Left ventricle myocardium inferior (tissue), 1 donor: ENCODE measurements at regions of chrX and their contacts with region 1.

Region 1: DNA sequence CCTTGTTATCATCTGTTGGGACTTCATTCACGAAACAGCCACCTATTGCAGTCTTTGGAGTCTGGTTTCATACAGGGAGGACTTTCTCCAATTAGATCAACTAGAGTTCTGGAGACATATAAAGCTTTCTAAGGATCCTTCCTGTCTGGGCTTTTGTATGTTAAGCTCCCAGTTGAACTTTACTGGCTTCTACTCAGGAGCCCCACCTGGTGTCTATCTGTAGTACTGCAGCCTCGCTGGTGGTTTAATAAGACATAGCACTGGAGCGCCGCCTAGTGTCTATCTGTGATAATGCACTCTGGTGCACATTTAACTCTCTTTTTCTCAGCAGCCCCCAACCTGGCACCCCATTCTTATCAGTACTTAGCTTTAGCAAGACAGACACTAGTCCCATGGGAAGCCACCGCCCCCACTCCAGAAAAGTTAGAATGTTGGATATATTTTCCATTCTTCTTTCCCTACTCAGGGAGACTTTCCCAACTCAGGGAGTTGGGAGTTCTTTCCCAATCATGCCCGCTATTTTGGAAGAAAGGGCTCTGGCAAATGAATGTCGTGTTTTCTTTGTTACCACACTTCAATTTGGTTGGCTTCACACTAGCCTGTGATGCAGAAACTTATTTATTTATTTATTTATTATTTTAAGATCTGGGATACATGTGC is 36.9 kb upstream of the SYTL4 start:
- DNase-seq: peak; percentile 62
- H3K4me3 ChIP-seq: no peak overlapping the region
- H3K27ac ChIP-seq: no peak overlapping the region
- H3K4me1 ChIP-seq: no peaks in the 10 kb centered on the region
- H3K27me3 ChIP-seq: no peaks in the 10 kb centered on the region
- CTCF ChIP-seq: peak; percentile 90

Region 2: GRCh38 chrX:100625985-100626491 is 142.8 kb before region 1 on chrX:
- intact Hi-C with region 1: no loop called
- DNase-seq: no peak
- H3K4me3 ChIP-seq: no peak overlapping the region
- H3K27ac ChIP-seq: no peak overlapping the region
- H3K4me1 ChIP-seq: no peaks in the 10 kb centered on the region
- H3K27me3 ChIP-seq: no peaks in the 10 kb centered on the region
- CTCF ChIP-seq: no peak

Region 3: GRCh38 chrX:100685284-100685996 is 83.4 kb before region 1 on chrX:
- intact Hi-C with region 1: loop called (anchors 5 kb)
- DNase-seq: no peak
- H3K4me3 ChIP-seq: no peak overlapping the region
- H3K27ac ChIP-seq: no peak overlapping the region
- H3K4me1 ChIP-seq: no peaks in the 10 kb centered on the region
- H3K27me3 ChIP-seq: no peaks in the 10 kb centered on the region
- CTCF ChIP-seq: peak; percentile 83

Region 4: GRCh38 chrX:100802843-100803242 is 34.0 kb after region 1 on chrX:
- intact Hi-C with region 1: no loop called
- DNase-seq: no peak
- H3K4me3 ChIP-seq: no peak overlapping the region
- H3K27ac ChIP-seq: no peak overlapping the region
- H3K4me1 ChIP-seq: no peaks in the 10 kb centered on the region
- H3K27me3 ChIP-seq: no peaks in the 10 kb centered on the region
- CTCF ChIP-seq: no peak

Region 5: DNA sequence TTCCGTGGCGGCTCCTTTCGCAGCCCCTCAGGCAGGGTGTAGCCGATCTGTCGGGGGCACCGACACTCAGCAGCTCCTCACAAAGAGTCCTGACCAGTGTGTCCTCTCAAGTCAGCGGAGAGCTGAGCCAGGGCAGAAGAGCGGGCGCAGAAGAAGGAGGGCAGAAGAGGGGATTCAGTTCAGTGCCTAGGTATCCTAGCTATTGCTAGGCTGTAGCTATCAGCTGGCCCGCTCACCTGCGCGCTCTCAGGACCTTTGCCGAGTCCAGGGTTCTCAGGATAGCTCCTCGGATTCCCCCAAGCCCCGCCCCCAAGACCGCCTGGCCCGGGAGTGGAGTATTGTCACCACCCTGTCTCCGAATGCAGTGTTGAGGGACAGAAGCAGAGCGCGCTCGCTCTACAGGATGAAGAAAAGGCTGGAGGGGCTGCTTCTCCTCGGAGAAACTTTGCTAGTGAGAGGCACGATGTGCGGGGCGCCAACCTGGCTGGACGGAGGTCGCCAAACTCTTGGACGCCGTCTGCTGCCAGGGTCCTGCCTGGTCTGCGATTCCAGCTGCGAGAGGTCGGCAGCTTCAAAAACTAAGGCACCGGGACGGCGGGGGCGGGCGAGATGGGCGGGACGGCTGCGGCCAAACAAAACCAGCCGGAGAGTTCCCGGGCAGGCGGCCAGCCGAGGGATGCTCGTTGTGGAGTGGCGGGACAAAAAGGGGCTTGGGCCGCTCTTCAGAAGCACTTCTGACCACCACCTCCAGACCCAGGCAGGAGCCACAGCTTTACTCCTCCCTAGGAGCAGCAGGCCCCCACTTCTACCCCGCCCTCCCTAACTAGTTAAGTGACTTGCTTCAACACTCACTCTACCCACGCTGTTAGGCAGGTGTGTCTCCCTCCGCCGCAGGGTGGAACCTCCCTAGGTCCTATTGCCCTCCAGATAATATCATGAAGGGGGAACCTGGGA is 160.1 kb after region 1 on chrX and contains the start of gene XKRX:
- intact Hi-C with region 1: no loop called
- DNase-seq: peak; percentile 20
- H3K4me3 ChIP-seq: peak within 1 kb of the TSS; percentile 58
- H3K27ac ChIP-seq: no peak within 1 kb of the TSS
- H3K4me1 ChIP-seq: no peaks in the 10 kb centered on the region
- H3K27me3 ChIP-seq: no peaks in the 10 kb centered on the region
- CTCF ChIP-seq: no peak
- total RNA-seq, gene XKRX: not detected

Region 6: DNA sequence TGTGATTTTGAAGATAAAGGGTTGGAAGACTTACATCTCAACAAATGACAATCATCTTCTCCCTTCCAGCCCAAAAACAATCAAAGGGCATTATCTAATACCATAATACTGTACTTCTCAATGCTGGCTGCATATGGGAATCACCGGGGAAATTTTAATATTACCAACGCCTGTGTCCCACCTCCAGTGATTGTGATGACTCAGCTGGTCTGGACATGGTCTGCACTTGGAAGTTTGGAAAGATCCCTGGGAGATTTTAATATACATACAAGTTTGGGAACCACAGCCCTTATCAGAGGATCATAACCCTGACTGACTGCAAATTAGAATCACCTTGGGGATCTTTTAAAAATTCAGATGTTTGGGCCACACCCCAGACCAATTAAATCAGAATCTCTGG is 230.6 kb after region 1 on chrX:
- intact Hi-C with region 1: no loop called
- DNase-seq: no peak
- H3K4me3 ChIP-seq: no peak overlapping the region
- H3K27ac ChIP-seq: no peak overlapping the region
- H3K4me1 ChIP-seq: no peaks in the 10 kb centered on the region
- H3K27me3 ChIP-seq: no peaks in the 10 kb centered on the region
- CTCF ChIP-seq: no peak